ENCODE measurements at regions of chr10 and their contacts with region 1.

Region 1: GRCh38 chr10:78302989-78303854 is 269.6 kb downstream of the RPS24 start:
- H3K4me3 Mint-ChIP-seq: peak overlapping the region; percentile 84
- H3K27ac Mint-ChIP-seq: peak overlapping the region; percentile 97
- H3K4me1 Mint-ChIP-seq: peaks cover 50% of the 10 kb centered on the region
- H3K27me3 Mint-ChIP-seq: peaks cover 19% of the 10 kb centered on the region

Region 2: DNA sequence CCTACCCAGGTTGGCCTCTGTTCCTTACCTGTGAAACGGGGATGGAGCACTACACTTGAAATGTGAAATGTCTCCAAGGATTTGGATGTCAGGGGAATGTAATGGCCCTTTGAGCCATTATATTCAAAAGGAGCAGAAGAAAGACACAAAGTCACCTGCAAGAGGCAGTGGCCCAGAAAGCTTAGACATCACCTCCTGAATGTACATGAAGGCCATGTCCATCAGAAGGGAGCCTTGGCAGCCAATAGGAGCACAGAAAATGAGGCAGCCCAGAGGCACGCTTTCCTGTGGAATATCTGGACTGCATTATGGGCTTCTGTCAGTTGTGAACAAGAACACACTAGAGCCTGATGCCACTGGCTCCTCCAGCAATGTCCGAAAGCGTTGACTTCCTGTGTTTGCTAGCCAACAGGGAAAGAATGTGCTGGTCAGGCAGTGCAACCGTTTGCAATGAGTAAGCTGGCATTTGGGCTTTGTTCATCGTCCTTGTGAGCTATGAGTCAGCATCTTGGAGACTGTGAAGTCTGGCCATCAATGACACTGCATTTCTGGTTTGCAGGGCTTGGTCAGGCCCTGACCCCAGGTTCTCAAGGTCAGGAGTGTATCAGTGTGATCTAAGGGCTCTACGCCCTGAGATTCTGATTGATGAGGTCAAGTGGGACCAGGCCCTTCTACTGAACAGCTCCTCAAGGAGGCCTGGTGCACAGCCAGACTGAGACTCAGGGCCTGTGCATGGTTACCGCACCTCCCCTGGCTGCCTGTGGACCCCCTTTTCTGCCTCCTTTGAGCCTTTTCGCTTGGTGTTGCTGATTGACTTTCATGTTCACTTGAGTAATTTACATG is 47.2 kb before region 1 on chr10:
- intact Hi-C with region 1: loop called (anchors 5 kb)
- H3K4me3 Mint-ChIP-seq: no peak overlapping the region
- H3K27ac Mint-ChIP-seq: peak overlapping the region; percentile 31
- H3K4me1 Mint-ChIP-seq: peaks cover 67% of the 10 kb centered on the region
- H3K27me3 Mint-ChIP-seq: peaks cover 6% of the 10 kb centered on the region

Region 3: DNA sequence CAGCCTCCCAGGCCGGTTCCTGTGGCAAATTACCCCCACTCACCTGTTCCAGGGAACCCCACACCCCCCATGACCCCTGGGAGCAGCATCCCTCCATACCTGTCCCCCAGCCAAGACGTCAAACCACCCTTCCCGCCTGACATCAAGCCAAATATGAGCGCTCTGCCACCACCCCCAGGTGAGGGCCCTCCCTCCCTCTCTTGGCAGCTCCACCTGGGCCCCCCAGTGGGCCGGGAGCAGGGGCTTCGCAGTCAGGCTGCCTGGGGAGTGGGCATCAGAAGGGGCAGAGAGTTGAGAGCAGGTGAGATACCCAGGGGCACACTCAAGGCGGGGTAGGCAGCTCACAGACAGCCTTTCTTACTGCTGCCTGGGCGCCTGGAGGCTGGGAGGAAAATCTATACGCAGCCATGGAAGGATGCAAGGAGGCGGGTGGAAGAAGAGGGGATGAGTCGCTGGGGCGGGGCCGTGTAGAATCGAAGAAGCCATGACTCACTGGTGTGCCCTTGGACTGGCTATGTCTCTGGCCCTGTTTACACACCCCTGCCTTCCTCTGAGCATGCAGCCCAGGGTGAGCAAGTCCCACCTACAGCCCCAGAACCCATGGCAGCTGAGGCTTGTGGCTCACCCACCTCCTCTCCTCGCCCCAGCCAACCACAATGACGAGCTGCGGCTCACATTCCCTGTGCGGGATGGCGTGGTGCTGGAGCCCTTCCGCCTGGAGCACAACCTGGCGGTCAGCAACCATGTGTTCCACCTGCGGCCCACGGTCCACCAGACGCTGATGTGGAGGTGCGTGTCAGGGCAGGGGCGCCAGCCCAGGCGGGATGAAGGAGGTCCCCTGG is 995.4 kb after region 1 on chr10:
- intact Hi-C with region 1: no loop called
- H3K4me3 Mint-ChIP-seq: no peak overlapping the region
- H3K27ac Mint-ChIP-seq: peak overlapping the region; percentile 21
- H3K4me1 Mint-ChIP-seq: peaks cover 70% of the 10 kb centered on the region
- H3K27me3 Mint-ChIP-seq: no peaks in the 10 kb centered on the region